ENCODE measurements at regions of chr16 and their contacts with region 1.

Region 1: GRCh38 chr16:27355610-27356009 is 41.8 kb downstream of the IL4R start:
- DNase-seq: peak in 4 of 5 donors; percentile 33 to 55 (median 50)
- ATAC-seq: peak in 3 of 4 donors; percentile 59 to 65 (median 65)
- H3K4me3 ChIP-seq: no peak overlapping the region
- H3K27ac ChIP-seq: peak overlapping the region in 1 of 12 donors; percentile 14
- H3K4me1 ChIP-seq: no peaks in the 10 kb centered on the region
- H3K27me3 ChIP-seq: no peaks in the 10 kb centered on the region
- CTCF ChIP-seq: peak; percentile 11 to 44 (median 30)
- POLR2A ChIP-seq: no peak

Region 2: DNA sequence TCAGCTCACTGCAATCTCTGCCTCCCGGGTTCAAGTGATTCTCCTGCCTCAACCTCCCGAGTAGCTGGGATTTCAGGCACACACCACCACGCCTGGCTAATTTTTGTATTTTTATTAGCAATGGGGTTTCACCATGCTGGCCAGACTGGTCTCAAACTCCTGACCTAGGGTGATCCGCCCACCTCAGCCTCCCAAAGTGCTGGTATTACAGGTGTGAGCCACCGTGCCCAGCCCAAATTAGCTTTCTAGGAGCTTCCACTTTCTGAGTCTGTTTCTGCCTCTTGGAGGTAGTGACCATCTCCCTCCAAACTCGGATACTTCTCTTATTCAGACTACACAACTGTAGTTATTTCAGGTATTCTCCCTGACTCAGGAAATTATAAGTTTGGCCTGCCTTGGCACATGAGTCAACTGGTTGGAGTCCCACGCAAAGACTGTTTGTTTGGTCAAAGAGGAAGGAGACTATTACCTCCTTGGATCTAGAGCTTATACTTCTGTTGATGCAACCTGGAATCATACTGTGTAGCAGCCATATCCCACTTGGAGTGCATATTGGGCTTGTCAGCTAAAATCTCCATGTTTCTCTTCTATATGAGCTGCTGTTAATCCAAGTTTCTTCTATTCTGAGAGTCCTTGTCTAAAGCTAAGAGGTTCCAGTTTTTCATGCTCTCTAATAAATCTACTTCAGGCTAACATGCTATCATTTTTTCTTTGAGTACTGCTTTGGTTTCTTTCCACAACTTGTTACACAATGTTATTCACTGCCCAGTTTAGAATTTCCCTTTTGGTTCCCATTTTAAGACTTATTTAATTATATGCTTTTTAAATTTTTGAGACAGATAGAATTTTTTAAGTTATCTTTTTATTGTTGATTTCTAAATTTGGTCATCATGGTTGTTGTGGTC is 34.3 kb before region 1 on chr16:
- intact Hi-C with region 1: loop called in 1 of 10 experiments (anchors 5 kb)
- DNase-seq: no peak
- ATAC-seq: no peak
- H3K4me3 ChIP-seq: no peak overlapping the region
- H3K27ac ChIP-seq: peak overlapping the region in 2 of 12 donors; percentile 65 to 98
- H3K4me1 ChIP-seq: peaks cover 0 to 92% (median 13%) of the 10 kb centered on the region in 12 donors
- H3K27me3 ChIP-seq: peaks cover 0 to 4% (median 0%) of the 10 kb centered on the region in 9 donors
- CTCF ChIP-seq: no peak
- POLR2A ChIP-seq: no peak

Region 3: DNA sequence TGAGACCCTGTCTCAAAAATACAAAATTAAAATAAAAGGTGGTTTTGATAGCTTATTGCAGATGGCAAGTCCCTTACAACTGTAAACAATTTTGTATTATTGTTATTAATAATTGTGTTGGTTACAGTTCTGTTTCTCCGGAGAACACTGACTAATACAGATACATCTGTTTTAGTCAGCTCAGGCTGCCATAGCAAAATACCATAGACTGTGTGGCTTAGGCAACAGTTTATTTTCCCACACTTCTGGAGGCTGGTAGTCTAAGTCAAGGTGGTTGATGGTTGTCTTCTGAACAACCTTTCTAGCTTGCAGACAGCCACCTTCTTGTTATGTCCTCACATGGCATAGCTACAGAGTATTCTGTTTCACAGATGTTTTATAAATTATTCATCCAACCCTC is 32.1 kb after region 1 on chr16:
- intact Hi-C with region 1: no loop called
- DNase-seq: no peak
- ATAC-seq: no peak
- H3K4me3 ChIP-seq: no peak overlapping the region
- H3K27ac ChIP-seq: no peak overlapping the region
- H3K4me1 ChIP-seq: peaks cover 0 to 37% (median 0%) of the 10 kb centered on the region in 12 donors
- H3K27me3 ChIP-seq: peaks cover 0 to 5% (median 0%) of the 10 kb centered on the region in 9 donors
- CTCF ChIP-seq: no peak
- POLR2A ChIP-seq: no peak